Psoas muscle (tissue), 8 donors: ENCODE measurements at regions of chr20 and their contacts with region 1.

Region 1: GRCh38 chr20:37192137-37192854 is 12.9 kb upstream of the MROH8 start:
- DNase-seq: peak; percentile 87 to 93
- ATAC-seq: peak; percentile 86 to 87 (median 86)
- H3K4me3 ChIP-seq: peak overlapping the region; percentile 15
- H3K27ac ChIP-seq: no peak overlapping the region
- H3K4me1 ChIP-seq: peaks cover 51% of the 10 kb centered on the region
- H3K27me3 ChIP-seq: no peaks in the 10 kb centered on the region
- CTCF ChIP-seq: peak; percentile 92

Region 2: DNA sequence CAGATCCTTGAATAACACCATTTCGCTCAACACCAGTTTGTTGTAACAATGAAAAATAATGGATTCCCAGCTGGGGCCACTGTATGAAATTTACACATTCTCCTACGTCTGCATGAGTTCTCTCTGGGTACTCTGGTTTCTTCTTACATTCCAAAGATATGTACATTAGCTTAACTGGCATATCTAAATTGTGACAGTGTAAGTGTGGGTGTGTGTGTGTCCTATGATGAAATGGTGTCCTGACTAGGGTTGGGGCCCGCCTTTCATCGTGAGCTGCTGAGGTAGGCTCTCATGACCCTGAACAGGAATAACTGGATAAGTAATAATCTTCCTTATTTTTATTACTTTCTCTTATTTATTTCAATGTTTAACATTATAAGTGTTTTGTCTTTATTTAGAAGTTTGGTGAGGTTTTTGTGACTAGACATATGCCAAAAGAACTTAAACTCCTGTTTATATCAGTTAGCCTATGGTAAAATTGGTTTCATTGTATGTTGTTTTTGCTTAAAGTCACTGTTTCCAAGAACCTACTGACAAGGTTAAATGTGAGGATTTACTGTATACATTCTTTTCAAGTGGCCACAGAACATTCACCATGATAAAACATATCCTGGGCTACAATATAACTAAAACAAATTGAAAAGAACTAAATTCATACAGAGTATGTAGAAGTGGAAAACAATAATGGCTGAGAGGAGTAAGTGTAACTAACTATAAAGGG is 138.9 kb before region 1 on chr20:
- intact Hi-C with region 1: no loop called
- DNase-seq: no peak
- ATAC-seq: no peak
- H3K4me3 ChIP-seq: no peak overlapping the region
- H3K27ac ChIP-seq: no peak overlapping the region
- H3K4me1 ChIP-seq: no peaks in the 10 kb centered on the region
- H3K27me3 ChIP-seq: no peaks in the 10 kb centered on the region
- CTCF ChIP-seq: no peak

Region 3: DNA sequence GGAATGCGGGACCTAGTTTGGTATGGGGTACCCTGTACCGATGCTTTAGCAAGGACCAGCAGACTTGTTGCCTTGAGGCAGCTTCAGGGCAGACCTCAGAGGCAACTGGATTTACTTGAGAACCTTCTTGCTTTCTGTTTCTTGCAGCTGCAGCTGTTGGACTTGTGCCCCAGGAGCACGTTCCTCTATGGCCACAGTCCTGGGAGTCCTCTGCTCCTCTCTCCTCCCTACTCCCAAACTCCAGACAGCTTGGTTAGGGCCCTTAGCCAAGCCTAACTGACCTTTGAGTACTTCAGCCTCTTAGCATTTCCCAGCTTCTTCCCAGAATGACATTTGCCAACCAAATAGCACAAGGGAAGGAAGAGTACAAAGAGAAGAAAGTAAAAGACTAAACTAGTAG is 34.6 kb after region 1 on chr20:
- intact Hi-C with region 1: loop called in 1 of 2 experiments (anchors 5 kb)
- DNase-seq: peak; percentile 25 to 76
- ATAC-seq: no peak
- H3K4me3 ChIP-seq: no peak overlapping the region
- H3K27ac ChIP-seq: peak overlapping the region; percentile 42
- H3K4me1 ChIP-seq: peaks cover 74% of the 10 kb centered on the region
- H3K27me3 ChIP-seq: no peaks in the 10 kb centered on the region
- CTCF ChIP-seq: no peak

Region 4: DNA sequence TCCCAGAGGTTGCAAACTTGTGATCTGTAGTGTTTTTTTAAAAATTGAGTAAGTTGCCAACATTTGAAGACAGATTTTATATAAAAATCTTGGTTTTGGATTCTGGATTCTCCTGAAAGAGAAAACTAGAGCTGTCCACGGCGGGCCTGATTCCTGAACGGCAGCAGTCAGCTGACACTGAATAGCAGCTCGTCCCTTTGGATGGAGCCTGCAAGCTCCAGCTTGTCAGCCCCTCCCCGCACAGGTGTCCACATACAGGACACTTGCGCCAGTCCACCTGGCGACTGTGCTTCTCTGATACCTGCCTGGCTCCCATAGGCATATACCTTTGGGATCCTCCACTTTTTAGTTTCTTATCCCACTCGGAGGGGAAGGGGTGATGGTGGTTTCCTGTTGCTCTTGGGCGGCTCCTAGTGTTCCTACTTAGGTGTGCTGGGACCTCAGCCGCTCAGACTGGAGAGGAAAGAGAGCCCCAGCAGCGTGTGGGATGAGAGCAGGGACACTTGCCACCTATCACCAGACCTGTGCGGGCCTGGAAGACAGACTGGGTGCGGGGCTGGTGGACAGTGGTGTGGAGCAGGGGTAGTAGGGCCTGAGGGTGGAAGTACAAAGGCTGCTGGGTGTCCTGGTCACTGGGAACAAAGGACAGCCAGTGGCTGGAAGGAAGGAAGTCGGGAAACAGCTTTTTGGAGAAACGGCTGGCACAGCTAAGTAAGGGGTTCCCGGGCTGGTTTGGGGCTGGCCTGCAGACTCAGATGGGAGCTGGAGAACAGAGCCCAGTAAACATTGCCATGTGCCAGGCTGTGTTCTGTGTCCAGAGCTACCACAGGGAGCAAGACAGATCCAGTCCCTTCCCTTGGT is 51.0 kb after region 1 on chr20:
- intact Hi-C with region 1: loop called in 1 of 2 experiments (anchors 5 kb)
- DNase-seq: no peak
- ATAC-seq: peak; percentile 19 to 37 (median 28)
- H3K4me3 ChIP-seq: no peak overlapping the region
- H3K27ac ChIP-seq: peak overlapping the region; percentile 26
- H3K4me1 ChIP-seq: peaks cover 47% of the 10 kb centered on the region
- H3K27me3 ChIP-seq: no peaks in the 10 kb centered on the region
- CTCF ChIP-seq: no peak

Region 5: DNA sequence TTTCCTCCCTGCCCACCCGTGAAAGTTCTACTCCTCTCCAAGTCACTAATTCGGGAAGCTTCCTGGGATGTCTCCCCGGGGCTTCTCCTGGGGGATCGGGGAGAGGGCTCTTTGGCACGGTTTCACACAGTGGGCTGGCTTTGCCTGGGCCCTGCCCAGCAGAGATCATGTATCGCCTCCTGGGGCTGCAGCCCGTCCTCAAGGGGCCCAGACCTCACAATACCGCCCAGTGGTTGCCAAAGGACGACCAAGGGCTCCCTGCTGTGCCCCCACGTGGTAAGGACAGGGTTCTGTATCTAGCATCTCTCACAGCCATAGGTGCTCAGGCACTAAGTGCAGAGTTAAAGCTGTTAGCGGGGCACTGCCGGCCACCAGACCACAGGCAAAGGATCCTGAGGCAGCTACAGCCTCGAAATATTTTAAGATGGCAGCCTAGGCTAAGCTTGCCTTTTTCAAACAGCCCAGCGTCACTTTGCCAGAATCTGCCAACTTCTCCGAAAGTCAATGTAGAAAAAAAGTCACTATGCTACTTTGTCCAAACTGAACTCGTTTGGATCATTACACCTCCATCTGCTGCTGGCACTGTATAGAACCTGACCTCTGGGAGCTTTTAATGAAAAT is 327.3 kb after region 1 on chr20:
- intact Hi-C with region 1: no loop called
- DNase-seq: peak in 1 of 2 donors; percentile 62
- ATAC-seq: peak; percentile 10 to 25 (median 16)
- H3K4me3 ChIP-seq: peak overlapping the region; percentile 100
- H3K27ac ChIP-seq: peak overlapping the region; percentile 100
- H3K4me1 ChIP-seq: peaks cover 63% of the 10 kb centered on the region
- H3K27me3 ChIP-seq: no peaks in the 10 kb centered on the region
- CTCF ChIP-seq: no peak